A549 (cell line): ENCODE measurements at regions of chr7 and their contacts with region 1.

Region 1: DNA sequence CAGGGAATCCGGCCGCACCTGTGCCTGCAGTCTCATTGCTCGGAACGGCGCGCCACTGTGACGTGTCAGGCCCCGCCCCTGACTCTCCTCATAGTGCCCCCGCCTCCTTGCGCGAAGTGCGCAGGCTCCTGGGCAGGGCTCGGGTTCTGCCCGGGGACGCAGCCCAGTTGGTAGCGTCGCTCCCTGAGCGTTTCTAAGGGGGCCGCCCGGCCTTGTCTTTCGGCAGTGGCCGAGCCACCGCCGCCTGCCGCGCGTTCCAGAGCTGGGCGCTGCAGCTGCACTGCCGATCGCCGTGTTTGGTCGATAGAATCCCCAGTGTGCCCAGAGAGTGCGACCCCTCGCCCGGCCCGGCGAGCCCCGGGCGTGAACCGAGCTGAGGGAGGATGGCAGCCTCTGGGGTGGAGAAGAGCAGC is at the start of gene KLHL7:
- DNase-seq: peak; percentile 76 to 93
- ATAC-seq: peak; percentile 96 to 99
- H3K4me3 ChIP-seq: peak within 1 kb of the TSS; percentile 96
- H3K27ac ChIP-seq: peak within 1 kb of the TSS; percentile 86 to 90
- H3K4me1 ChIP-seq: peaks cover 17% of the 10 kb centered on the region; the same call in 2 of the 3 replicates
- CTCF ChIP-seq: no peak
- EP300 ChIP-seq: no peak
- POLR2A ChIP-seq: peak; percentile 92
- RAD21 ChIP-seq: no peak
- polyA plus RNA-seq, gene KLHL7: 36.3 and 45.4 TPM in 2 replicates

Region 2: DNA sequence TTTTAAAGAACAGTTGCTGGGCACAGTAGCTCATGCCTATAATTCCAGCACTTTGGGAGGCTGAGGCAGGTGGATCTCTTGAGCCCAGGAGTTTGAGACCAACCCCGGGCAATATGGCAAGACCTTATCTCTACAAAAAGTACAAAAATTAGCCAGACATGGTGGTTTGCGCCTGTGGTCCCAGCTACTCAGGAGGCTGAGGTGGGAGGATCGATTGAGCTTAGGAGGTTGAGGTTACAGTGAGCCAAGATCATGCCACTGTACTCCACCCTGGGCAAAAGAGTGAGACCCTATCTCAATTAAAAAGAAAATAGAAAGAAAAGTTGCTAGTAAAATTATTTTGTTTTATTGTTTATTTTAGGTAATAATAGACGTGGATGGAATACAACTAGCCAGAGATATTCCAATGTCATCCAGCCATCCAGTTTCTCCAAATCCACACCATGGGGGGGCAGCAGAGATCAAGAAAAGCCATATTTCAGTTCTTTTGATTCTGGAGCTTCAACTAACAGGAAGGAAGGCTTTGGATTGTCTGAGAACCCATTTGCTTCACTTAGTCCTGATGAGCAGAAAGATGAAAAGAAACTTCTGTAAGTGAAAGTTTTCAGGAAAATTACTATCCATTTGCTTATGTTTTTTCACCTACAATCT is 79.2 kb after region 1 on chr7:
- CTCF ChIA-PET with region 1: interaction called, 5 read pairs
- POLR2A ChIA-PET with region 1: interaction called, 17 read pairs
- DNase-seq: peak; percentile 22 to 61
- ATAC-seq: no peak
- H3K4me3 ChIP-seq: no peak overlapping the region
- H3K27ac ChIP-seq: no peak overlapping the region
- H3K4me1 ChIP-seq: peaks cover 23% of the 10 kb centered on the region
- CTCF ChIP-seq: peak; percentile 51
- EP300 ChIP-seq: no peak
- POLR2A ChIP-seq: no peak
- RAD21 ChIP-seq: peak; percentile 52 to 63